Activated CD4-positive, alpha-beta T cell treated with anti-CD3 and anti-CD28 coated beads for 36 hours (primary cell): ENCODE measurements at regions of chr16 and their contacts with region 1.

Region 1: DNA sequence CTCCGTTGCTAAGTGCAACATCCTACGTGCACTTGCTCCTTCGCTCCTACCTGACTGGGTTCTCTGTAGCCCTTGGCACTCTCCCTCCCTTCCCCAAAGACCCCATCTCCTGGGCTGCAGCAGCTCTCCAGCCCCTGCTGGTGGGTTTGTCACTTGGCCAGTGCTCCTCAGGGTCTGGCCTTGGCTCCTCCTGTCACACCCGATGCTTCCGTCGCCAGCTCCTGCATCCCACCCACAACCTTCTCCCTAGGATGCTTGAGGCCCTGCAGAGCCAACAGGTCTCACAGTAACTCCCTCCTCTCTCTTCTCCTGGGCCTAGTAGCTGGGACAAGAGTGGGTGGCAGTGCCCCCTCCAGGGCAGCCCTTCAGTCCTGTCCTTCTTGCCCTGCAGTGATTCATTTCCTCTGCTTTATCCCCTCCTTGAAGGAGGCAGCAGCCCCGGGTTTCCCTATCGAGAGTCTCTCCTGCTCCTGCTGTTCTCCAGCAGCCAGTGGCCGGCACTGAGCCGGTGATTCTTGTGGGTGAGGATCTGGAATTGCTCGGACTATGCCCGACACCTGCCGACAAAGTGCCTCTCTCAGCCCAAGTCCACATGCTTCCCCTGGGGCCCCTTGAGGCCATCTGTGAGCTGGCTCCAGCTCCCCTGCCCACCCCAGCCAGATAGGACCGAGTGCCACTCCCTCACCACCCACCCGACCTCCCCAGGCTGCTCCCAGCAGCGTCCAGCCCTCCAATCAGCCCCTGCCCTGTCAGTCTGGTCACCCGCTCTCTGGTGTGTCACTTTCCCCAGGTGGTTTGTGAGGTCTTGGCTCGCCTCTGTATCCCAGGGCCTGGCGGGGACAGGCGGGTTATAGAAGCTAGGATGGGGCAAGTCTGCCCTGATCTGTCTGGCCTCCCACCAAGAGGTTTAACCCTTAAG is 3.8 kb downstream of the LITAFD start:
- DNase-seq: no peak
- ATAC-seq: peak; percentile 7
- H3K4me3 Mint-ChIP-seq: no peak overlapping the region
- H3K27ac Mint-ChIP-seq: no peak overlapping the region
- H3K4me1 Mint-ChIP-seq: peaks cover 7% of the 10 kb centered on the region
- H3K27me3 Mint-ChIP-seq: peaks cover 3% of the 10 kb centered on the region

Region 2: DNA sequence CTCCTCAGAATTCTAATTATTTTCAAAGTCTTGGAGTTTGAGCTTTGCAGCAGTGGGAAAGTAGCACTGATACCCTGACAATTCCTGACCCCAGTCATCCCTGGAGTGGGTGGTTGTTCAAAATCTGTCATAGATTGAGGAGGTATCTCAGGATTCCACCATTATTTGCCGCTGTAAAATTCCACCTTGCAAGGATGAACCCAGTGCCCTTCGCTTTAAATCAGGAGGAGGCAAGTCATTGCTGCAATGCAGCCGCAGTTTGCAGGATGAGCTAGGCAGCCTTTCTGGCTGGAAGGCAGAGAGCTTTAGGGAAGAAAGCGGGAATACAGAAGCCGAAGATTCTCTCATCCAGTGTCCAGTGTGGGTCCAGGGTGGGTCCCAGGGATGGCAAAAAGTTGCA is 1256.4 kb before region 1 on chr16:
- CTCF ChIA-PET with region 1: no interaction called
- POLR2A ChIA-PET with region 1: no interaction called
- intact Hi-C with region 1: no loop called
- DNase-seq: no peak
- ATAC-seq: no peak
- H3K4me3 Mint-ChIP-seq: no peak overlapping the region
- H3K27ac Mint-ChIP-seq: no peak overlapping the region
- H3K4me1 Mint-ChIP-seq: no peaks in the 10 kb centered on the region
- H3K27me3 Mint-ChIP-seq: no peaks in the 10 kb centered on the region

Region 3: GRCh38 chr16:8806272-8806983 is 79.5 kb before region 1 on chr16:
- CTCF ChIA-PET with region 1: no interaction called
- POLR2A ChIA-PET with region 1: no interaction called
- intact Hi-C with region 1: no loop called
- DNase-seq: no peak
- ATAC-seq: no peak
- H3K4me3 Mint-ChIP-seq: no peak overlapping the region
- H3K27ac Mint-ChIP-seq: no peak overlapping the region
- H3K4me1 Mint-ChIP-seq: no peaks in the 10 kb centered on the region
- H3K27me3 Mint-ChIP-seq: no peaks in the 10 kb centered on the region

Region 4: GRCh38 chr16:8826278-8826879 is 59.6 kb before region 1 on chr16:
- CTCF ChIA-PET with region 1: no interaction called
- POLR2A ChIA-PET with region 1: no interaction called
- intact Hi-C with region 1: loop called in 1 of 2 experiments (anchors 2 kb)
- DNase-seq: no peak
- ATAC-seq: no peak
- H3K4me3 Mint-ChIP-seq: no peak overlapping the region
- H3K27ac Mint-ChIP-seq: no peak overlapping the region
- H3K4me1 Mint-ChIP-seq: no peaks in the 10 kb centered on the region
- H3K27me3 Mint-ChIP-seq: no peaks in the 10 kb centered on the region

Region 5: DNA sequence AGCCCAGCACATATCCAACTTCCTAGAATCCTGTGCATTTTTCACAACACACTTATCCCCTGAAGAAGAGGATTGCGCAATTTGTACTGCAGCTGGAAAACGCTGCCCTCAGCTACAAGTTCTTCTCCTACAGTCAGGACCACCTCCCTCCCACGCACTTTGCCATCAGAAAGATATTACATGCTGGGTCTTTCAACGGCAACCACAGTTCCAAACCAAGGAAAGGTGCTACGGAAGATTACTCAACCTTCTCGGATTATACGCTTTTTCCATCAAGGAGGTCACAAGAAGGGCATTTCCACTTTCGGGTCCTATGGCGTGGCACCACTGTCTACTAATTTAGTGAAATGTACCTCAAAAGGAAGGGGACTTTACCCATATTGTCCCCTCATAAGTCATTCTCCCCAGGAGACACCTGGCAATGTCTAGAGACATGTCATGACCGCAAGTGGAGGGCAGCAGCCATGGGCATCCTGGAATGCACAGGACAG is 42.6 kb after region 1 on chr16:
- CTCF ChIA-PET with region 1: no interaction called
- POLR2A ChIA-PET with region 1: no interaction called
- intact Hi-C with region 1: loop called in 1 of 2 experiments (anchors 1 kb)
- DNase-seq: peak; percentile 66
- ATAC-seq: peak; percentile 84
- H3K4me3 Mint-ChIP-seq: no peak overlapping the region
- H3K27ac Mint-ChIP-seq: peak overlapping the region; percentile 61
- H3K4me1 Mint-ChIP-seq: peaks cover 62% of the 10 kb centered on the region
- H3K27me3 Mint-ChIP-seq: no peaks in the 10 kb centered on the region